AG04449 (cell line): ENCODE measurements at regions of chr2 and their contacts with region 1.

Region 1: GRCh38 chr2:26144953-26145680 is 27.8 kb upstream of the GAREM2 start:
- DNase-seq: peak; percentile 14
- H3K4me3 ChIP-seq: no peak overlapping the region
- CTCF ChIP-seq: peak; percentile 61

Region 2: GRCh38 chr2:25851740-25852503 is 293.2 kb before region 1 on chr2:
- CTCF ChIA-PET with region 1: interaction called, 13 read pairs
- POLR2A ChIA-PET with region 1: no interaction called
- DNase-seq: peak; percentile 74
- H3K4me3 ChIP-seq: no peak overlapping the region
- CTCF ChIP-seq: peak; percentile 44

Region 3: GRCh38 chr2:25951071-25951547 is 194.0 kb before region 1 on chr2:
- CTCF ChIA-PET with region 1: interaction called, 247 read pairs
- POLR2A ChIA-PET with region 1: no interaction called
- DNase-seq: peak; percentile 17
- H3K4me3 ChIP-seq: no peak overlapping the region
- CTCF ChIP-seq: peak; percentile 95

Region 4: DNA sequence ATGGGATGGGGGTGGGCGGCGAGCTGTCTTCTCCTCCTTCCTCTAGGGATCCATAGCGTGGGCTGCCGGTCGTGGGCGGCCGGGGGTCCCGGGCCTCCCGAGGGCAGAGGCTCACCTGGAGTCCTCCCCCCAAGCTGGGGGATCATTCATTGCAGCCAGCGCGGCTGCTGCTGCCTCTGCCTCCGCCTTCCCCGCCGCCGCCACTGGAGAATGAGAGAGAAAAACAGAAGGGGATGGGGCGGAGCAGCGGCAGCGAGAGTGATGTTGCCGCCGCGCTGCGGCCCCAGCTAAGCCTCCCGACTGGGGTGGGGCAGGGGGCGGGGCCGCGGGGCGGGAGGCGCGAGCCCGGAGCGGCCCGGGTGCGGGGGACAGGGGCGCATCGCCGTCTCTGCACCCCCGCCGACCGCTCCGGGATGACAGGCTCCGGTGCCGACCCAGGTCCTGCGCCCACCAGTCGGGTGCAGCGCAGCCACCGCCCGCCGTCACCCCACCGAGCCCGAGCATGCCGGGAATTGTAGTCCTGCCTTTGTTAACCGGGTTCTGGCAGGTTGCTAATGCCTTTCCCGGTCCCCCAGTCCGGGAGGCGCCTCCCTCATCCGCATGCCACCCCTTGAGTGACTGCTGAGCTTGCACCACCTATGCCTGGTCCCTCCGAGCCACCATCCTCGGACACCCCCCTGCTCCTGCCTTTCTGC is 162.7 kb before region 1 on chr2 and contains the start of gene KIF3C:
- CTCF ChIA-PET with region 1: interaction called, 189 read pairs
- POLR2A ChIA-PET with region 1: no interaction called
- DNase-seq: no peak
- H3K4me3 ChIP-seq: peak within 1 kb of the TSS; percentile 72
- CTCF ChIP-seq: no peak

Region 5: GRCh38 chr2:26126074-26126473 is 19.0 kb before region 1 on chr2:
- CTCF ChIA-PET with region 1: interaction called, 13 read pairs
- POLR2A ChIA-PET with region 1: no interaction called
- DNase-seq: no peak
- H3K4me3 ChIP-seq: no peak overlapping the region
- CTCF ChIP-seq: no peak